Thyroid gland (tissue), 4 donors: ENCODE measurements at regions of chr2 and their contacts with region 1.

Region 1: DNA sequence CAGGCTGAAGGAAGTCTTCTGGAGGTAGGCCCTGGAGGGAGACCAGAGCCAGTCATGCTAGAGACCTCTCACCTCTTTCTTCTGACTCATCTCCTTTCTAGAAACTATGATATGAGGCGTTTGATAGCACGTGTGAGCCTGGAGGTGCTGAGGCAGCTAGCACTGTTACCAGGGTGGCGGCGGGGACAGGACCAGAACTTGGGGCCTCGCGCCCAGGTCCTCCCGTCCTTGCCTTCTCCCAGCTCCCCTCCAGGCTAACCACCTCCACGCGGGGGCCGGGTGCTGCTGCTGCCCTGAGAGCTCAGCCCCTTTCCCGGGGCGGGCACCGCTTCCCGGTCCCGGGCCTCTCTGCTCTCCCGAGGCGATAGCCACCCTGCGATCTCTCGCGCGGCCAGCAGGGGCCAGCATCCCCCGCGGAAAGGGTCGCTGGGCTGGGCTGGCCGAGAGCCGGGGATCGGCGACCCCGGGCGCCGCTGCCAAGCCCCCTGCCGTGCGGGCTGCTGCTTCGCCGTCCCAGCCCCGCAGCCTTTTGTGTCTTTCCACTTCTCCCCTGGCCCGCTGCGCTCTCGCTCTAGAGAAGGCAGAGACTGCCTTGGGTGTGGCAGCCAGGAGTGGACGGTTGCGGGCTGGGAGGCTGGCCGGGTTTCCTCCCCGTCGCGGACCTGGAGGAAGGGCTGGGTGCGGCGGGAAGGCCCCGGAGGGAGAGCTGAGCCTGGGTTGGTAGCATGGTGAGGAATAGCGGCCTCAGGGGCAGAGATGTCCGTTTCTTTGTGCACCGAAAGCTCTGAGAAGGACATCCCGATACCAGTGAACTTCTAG is 49.1 kb downstream of the TMEM17 start:
- DNase-seq: peak; percentile 67 to 70
- H3K4me3 ChIP-seq: peak overlapping the region; percentile 21 to 77 (median 57)
- H3K27ac ChIP-seq: peak overlapping the region in 2 of 3 donors; percentile 77 to 78
- H3K4me1 ChIP-seq: peaks cover 6 to 20% of the 10 kb centered on the region in 2 donors
- H3K27me3 ChIP-seq: no peaks in the 10 kb centered on the region
- CTCF ChIP-seq: peak; percentile 89 to 99 (median 98)
- POLR2A ChIP-seq: no peak

Region 2: DNA sequence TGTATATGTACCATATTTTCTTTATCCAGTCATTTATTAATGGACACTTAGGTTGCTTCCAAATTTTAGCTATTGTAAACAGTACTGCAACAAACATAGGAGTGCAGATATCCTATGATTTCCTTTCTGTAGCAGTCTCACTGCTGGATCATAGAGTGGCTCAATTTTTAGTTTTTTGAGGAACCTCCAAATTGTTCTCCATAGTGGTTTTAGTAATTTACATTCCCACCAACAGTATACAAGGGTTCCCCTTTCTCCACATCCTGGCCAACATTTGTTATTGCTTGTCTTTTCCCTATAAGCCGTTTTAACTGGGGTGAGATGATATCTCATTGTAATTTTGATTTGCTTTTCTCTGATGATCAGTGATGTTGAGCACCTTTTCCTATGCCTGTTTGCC is 65.2 kb before region 1 on chr2:
- intact Hi-C with region 1: no loop called
- DNase-seq: no peak
- H3K4me3 ChIP-seq: no peak overlapping the region
- H3K27ac ChIP-seq: no peak overlapping the region
- H3K4me1 ChIP-seq: peaks cover 0 to 4% of the 10 kb centered on the region in 2 donors
- H3K27me3 ChIP-seq: no peaks in the 10 kb centered on the region
- CTCF ChIP-seq: no peak
- POLR2A ChIP-seq: no peak

Region 3: DNA sequence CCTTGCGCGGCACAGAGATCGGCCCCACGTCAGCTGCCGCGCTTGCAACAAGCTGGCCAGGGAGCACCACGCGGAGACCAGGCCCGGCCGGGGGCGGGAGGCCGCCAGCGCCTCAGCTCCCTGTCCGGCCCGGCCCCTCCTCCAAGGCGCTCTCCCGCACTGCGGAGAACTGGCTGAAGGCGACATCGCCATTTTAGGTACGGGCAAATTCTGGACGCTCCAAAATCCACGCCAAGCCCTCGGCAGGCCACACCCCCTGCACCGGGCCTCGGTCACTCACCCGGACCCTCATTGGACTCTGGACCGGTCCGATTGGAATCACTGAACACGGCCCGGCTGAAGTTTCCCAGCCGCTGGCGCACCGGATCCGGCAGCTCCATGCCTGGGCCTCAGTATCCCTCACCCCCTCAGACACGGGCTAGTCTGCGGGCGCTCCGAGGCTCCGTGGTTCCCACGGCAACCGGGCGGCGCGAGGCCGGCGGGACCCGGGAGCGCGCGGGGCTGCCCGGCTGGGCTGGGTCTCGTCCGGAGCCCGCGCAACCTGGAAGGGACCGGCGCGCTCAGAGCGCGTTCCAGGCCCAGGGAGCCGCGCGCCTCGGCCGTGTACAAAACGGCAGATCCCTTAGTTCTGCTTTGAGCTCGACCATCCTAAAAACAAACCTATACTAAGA is 49.0 kb after region 1 on chr2 and contains the start of gene TMEM17:
- intact Hi-C with region 1: loop called (anchors 5 kb)
- DNase-seq: peak; percentile 93
- H3K4me3 ChIP-seq: peak within 1 kb of the TSS; percentile 5 to 54 (median 53)
- H3K27ac ChIP-seq: peak within 1 kb of the TSS; percentile 86 to 96 (median 94)
- H3K4me1 ChIP-seq: peaks cover 2 to 6% of the 10 kb centered on the region in 2 donors
- H3K27me3 ChIP-seq: no peaks in the 10 kb centered on the region
- CTCF ChIP-seq: no peak
- POLR2A ChIP-seq: peak in 1 of 2 donors; percentile 86
- total RNA-seq, gene TMEM17: 2.1 to 6.0 (median 4.8) TPM

Region 4: GRCh38 chr2:62774555-62775366 is 317.8 kb after region 1 on chr2:
- intact Hi-C with region 1: loop called (anchors 2 kb)
- DNase-seq: peak in 1 of 2 donors; percentile 9
- H3K4me3 ChIP-seq: no peak overlapping the region
- H3K27ac ChIP-seq: no peak overlapping the region
- H3K4me1 ChIP-seq: no peaks in the 10 kb centered on the region
- H3K27me3 ChIP-seq: no peaks in the 10 kb centered on the region
- CTCF ChIP-seq: peak; percentile 41 to 88 (median 68)
- POLR2A ChIP-seq: no peak